ENCODE measurements at regions of chr12 and their contacts with region 1.

Region 1: GRCh38 chr12:121550974-121551634 is 29.7 kb downstream of the KDM2B start:
- DNase-seq: no peak
- ATAC-seq: no peak
- H3K4me3 ChIP-seq: no peak overlapping the region
- H3K4me3 Mint-ChIP-seq: no peak overlapping the region
- H3K27ac ChIP-seq: no peak overlapping the region
- H3K27ac Mint-ChIP-seq: no peak overlapping the region
- H3K4me1 ChIP-seq: peaks cover 0 to 3% of the 10 kb centered on the region in 2 donors
- H3K4me1 Mint-ChIP-seq: peaks cover 2% of the 10 kb centered on the region
- H3K27me3 ChIP-seq: no peaks in the 10 kb centered on the region
- H3K27me3 Mint-ChIP-seq: no peaks in the 10 kb centered on the region
- CTCF ChIP-seq: no peak

Region 2: DNA sequence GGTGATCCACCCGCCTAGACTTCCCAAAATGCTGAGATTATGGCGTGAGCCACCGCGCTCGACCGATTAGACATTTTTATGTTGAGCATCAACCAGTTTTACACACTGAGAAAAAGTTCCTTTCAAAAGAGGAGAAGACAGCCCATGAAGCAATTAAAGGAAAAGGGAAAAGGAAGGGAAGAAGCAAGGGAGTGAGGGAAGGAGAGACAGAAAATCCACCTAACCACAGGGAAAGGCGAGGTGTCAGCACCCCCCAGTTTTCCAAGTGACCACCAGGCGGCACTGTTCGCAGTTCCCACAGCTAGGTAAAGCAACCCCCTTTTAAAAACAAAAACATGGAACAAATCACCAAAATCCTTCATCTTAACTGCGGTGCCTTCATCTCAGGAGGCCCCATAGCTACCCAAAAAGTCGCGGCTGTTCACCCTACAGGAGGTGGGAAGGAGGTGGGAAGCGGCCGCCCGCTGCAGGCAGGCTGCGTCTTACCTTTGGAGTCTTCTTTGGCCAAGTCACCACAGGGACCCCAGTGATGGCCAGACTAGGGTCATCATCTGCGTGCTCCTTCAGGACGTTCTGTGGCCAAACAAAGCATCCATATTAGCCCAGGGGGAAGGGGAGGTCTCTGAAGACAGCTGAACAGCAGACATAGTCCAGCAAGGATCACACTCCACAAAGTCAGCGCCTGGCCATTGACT is 56.9 kb before region 1 on chr12:
- CTCF ChIA-PET with region 1: interaction called, 44 read pairs
- POLR2A ChIA-PET with region 1: no interaction called
- intact Hi-C with region 1: no loop called
- DNase-seq: peak; percentile 74
- ATAC-seq: peak; percentile 54
- H3K4me3 ChIP-seq: no peak overlapping the region
- H3K4me3 Mint-ChIP-seq: no peak overlapping the region
- H3K27ac ChIP-seq: no peak overlapping the region
- H3K27ac Mint-ChIP-seq: peak overlapping the region; percentile 60
- H3K4me1 ChIP-seq: peaks cover 23 to 42% of the 10 kb centered on the region in 2 donors
- H3K4me1 Mint-ChIP-seq: peaks cover 31% of the 10 kb centered on the region
- H3K27me3 ChIP-seq: no peaks in the 10 kb centered on the region
- H3K27me3 Mint-ChIP-seq: no peaks in the 10 kb centered on the region
- CTCF ChIP-seq: peak; percentile 85

Region 3: DNA sequence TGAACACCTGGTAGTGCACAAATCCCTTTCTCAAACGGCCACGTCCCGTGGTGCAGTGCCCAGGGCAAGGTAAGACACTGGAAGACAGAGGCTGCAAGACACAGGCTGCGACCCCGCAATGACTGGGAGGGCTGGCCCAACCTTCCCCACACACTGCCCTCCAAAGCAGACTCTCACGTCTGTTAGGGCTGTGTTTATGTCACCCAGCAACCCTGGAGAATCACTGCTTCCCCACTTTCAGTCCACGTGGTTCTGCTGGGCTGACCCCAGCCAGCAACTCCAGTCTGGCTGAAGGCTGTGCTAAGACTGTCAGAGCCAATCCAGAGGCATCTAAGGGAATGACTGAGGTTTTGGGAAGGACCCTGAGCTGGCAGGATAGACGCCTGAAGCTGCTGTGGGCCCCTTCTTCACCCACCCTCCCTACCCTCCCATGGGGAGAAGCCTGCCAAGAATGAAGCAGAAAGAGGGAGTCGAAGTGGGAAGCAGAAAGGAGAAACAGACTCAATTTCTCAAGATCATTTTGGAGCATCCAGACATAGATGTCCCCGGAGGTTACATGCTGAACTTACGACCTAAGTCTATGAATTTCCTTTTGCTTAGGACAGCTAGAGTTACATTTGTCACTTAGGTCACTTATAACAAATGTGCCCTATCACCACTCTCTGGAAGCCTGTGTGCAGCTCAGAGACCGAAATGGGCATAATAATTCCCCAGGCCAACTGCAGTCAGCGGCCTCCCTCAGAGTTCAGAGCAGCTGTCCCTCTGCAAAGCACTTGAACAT is 18.1 kb after region 1 on chr12:
- CTCF ChIA-PET with region 1: interaction called, 42 read pairs
- POLR2A ChIA-PET with region 1: interaction called, 3 read pairs
- intact Hi-C with region 1: no loop called
- DNase-seq: no peak
- ATAC-seq: no peak
- H3K4me3 ChIP-seq: no peak overlapping the region
- H3K4me3 Mint-ChIP-seq: no peak overlapping the region
- H3K27ac ChIP-seq: no peak overlapping the region
- H3K27ac Mint-ChIP-seq: peak overlapping the region; percentile 10
- H3K4me1 ChIP-seq: no peaks in the 10 kb centered on the region
- H3K4me1 Mint-ChIP-seq: peaks cover 4% of the 10 kb centered on the region
- H3K27me3 ChIP-seq: no peaks in the 10 kb centered on the region
- H3K27me3 Mint-ChIP-seq: no peaks in the 10 kb centered on the region
- CTCF ChIP-seq: no peak

Region 4: DNA sequence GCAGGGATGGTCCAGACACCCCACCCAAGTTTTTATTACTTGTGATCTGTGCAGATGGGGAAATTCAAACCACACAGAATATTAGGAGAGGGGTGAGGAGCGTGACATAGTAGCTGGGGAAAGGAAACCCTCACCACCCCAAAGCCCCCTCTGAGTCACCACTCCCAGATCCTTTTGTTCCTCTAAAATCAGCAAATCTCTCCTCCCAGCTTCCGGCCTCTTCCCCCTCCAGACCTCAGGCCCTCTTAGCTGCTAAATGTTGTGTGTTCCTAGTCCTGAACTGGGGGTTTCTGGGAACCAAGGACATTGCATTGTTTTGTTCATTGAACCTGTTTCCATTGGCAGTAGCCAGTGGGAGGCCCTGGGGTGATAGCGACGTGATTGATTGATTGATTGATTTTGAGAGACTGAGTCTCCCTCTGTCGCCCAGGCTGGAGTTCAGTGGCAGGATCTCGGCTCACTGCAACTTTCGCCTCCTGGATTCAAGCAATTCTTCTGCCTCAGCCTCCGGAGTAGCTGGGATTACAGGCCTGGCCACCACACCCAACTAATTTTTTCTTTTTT is 69.3 kb after region 1 on chr12:
- CTCF ChIA-PET with region 1: interaction called, 213 read pairs
- POLR2A ChIA-PET with region 1: no interaction called
- intact Hi-C with region 1: loop called (anchors 1 kb)
- DNase-seq: no peak
- ATAC-seq: no peak
- H3K4me3 ChIP-seq: no peak overlapping the region
- H3K4me3 Mint-ChIP-seq: no peak overlapping the region
- H3K27ac ChIP-seq: no peak overlapping the region
- H3K27ac Mint-ChIP-seq: peak overlapping the region; percentile 15
- H3K4me1 ChIP-seq: peaks cover 21 to 31% of the 10 kb centered on the region in 2 donors
- H3K4me1 Mint-ChIP-seq: peaks cover 33% of the 10 kb centered on the region
- H3K27me3 ChIP-seq: no peaks in the 10 kb centered on the region
- H3K27me3 Mint-ChIP-seq: no peaks in the 10 kb centered on the region
- CTCF ChIP-seq: no peak

Region 5: GRCh38 chr12:121649819-121650353 is 98.8 kb after region 1 on chr12:
- CTCF ChIA-PET with region 1: interaction called, 13 read pairs
- POLR2A ChIA-PET with region 1: no interaction called
- intact Hi-C with region 1: no loop called
- DNase-seq: no peak
- ATAC-seq: no peak
- H3K4me3 ChIP-seq: no peak overlapping the region
- H3K4me3 Mint-ChIP-seq: no peak overlapping the region
- H3K27ac ChIP-seq: no peak overlapping the region
- H3K27ac Mint-ChIP-seq: peak overlapping the region; percentile 50
- H3K4me1 ChIP-seq: no peaks in the 10 kb centered on the region
- H3K4me1 Mint-ChIP-seq: peaks cover 6% of the 10 kb centered on the region
- H3K27me3 ChIP-seq: no peaks in the 10 kb centered on the region
- H3K27me3 Mint-ChIP-seq: no peaks in the 10 kb centered on the region
- CTCF ChIP-seq: no peak

Region 6: DNA sequence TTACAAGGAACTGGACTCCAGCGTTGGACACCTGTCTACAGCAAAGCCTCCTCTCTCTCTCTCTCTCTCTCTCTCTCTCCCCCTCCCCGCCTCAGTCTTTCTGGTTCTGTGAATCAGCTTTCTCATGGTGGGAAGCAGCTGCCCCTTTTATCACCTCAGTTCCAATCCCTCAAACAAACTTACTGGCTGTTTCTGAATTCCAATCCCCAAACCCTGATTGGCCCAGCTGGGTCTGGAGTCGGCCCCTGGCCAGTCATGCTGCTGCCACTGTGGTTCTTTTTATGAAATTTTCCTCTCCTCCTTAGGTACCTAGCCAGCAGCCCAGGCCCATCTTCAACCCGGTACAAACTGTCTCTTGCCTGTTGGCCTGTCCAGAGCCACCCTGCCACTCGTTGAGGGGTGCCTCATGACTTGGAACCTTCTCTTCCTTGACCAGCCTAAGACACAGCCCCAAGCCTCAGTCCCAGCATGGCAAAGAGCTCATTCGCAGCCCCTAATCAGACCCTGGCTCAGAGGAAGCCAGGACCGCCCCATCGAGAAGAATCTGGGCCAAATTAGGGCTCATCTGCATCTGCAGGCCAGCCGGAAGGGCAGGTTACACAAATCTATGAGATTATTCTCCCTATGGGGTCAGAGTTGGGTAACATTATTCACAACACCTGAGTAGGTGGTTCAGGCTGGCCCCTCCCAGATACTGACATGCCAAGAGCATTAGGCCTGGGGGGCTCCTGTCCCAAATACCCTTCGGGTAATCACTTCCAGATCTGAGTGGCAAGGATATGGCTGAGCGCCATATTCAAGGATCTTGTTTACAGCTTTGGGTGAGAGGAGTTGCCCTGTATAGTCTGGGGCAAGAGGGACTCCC is 127.8 kb after region 1 on chr12:
- CTCF ChIA-PET with region 1: interaction called, 178 read pairs
- POLR2A ChIA-PET with region 1: interaction called, 7 read pairs
- intact Hi-C with region 1: loop called (anchors 1 kb)
- DNase-seq: no peak
- ATAC-seq: no peak
- H3K4me3 ChIP-seq: no peak overlapping the region
- H3K4me3 Mint-ChIP-seq: no peak overlapping the region
- H3K27ac ChIP-seq: no peak overlapping the region
- H3K27ac Mint-ChIP-seq: peak overlapping the region; percentile 65
- H3K4me1 ChIP-seq: peaks cover 0 to 3% of the 10 kb centered on the region in 2 donors
- H3K4me1 Mint-ChIP-seq: peaks cover 2% of the 10 kb centered on the region
- H3K27me3 ChIP-seq: no peaks in the 10 kb centered on the region
- H3K27me3 Mint-ChIP-seq: no peaks in the 10 kb centered on the region
- CTCF ChIP-seq: no peak

Region 7: DNA sequence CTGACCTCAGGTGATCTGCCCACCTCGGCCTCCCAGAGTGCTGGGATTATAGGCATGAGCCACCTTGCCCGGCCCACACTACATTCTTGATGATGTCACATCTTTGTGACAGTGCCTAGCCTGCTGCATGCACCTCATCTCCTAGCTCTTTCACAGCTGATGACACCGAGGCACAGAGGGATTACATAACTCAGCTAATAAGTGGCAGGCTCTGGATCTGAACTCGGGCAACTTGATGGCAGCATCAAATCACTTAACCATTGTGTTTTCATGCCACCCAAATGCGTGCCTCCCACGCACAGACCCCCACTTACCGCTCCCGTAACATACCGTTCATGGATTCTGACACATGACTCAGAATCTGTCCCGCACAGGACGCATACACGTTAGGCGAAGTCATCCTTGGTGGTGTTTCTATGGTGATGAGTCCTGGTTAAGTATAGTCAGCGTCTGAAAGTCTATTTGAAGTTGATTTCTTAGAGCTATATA is 168.9 kb after region 1 on chr12:
- CTCF ChIA-PET with region 1: no interaction called
- POLR2A ChIA-PET with region 1: no interaction called
- intact Hi-C with region 1: no loop called
- DNase-seq: no peak
- ATAC-seq: no peak
- H3K4me3 ChIP-seq: no peak overlapping the region
- H3K4me3 Mint-ChIP-seq: no peak overlapping the region
- H3K27ac ChIP-seq: no peak overlapping the region
- H3K27ac Mint-ChIP-seq: no peak overlapping the region
- H3K4me1 ChIP-seq: no peaks in the 10 kb centered on the region
- H3K4me1 Mint-ChIP-seq: no peaks in the 10 kb centered on the region
- H3K27me3 ChIP-seq: no peaks in the 10 kb centered on the region
- H3K27me3 Mint-ChIP-seq: no peaks in the 10 kb centered on the region
- CTCF ChIP-seq: no peak

Measured in B cell (primary cell).